Psoas muscle (tissue), 8 donors: ENCODE measurements at regions of chr5 and their contacts with region 1.

Region 1: DNA sequence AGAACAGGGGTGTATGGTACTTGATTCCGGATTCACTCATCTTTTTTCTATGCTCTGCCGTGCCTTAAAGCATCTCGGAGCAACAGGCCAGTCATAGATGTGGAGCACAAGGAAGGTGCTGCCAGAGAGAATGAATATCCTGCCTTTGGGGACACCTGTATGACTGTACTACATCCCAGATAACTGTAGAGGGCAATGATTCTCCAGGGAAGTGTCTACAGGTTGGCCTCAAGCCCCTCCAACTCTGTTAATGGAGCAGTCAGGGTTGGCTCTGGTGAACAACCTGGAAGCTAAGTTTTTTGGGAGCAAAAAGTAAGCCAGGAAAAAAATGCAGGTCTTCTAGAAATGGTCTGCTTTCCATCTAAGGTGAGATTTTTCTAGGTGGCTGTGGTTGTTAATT is 71.0 kb downstream of the NREP start:
- DNase-seq: no peak
- ATAC-seq: peak in 1 of 4 donors; percentile 36
- H3K4me3 ChIP-seq: no peak overlapping the region
- H3K27ac ChIP-seq: no peak overlapping the region
- H3K4me1 ChIP-seq: peaks cover 9% of the 10 kb centered on the region
- H3K27me3 ChIP-seq: no peaks in the 10 kb centered on the region
- CTCF ChIP-seq: peak; percentile 16

Region 2: DNA sequence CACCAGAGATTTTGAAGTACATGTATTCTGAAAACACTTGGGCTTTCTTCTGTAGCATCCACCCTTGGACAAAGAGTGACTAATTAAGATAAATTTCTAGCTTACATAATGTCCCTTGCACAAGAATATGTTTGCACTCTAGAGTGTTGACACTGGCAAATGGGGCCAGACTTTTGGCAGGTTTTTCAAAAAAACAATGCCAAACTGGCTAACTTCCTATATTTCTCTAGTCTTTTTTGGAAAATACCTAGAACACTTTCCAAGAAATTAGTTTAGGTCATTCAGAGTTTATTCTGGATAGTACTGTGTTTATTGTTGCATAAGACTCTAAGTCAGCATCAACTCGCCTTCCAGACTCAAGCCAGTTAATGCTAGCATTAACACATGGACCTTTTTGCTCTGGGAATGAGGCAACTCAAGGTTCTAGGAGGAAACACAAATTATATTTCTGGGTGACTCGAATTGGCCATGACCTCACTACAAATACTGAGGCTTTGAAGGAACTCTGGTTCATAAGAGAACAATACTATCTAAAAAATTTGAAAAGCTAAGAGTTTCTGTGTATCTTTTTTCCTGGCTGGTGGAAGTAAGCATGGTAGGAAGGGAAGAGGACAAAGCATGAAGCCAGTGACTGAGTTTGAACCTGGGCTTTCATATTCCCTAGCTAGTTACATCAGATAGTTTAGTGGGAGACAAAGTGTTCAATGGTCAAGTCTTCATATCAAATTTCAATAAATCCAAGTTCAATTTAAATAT is 30.6 kb before region 1 on chr5:
- intact Hi-C with region 1: no loop called
- DNase-seq: no peak
- ATAC-seq: peak in 3 of 4 donors; percentile 48 to 59 (median 48)
- H3K4me3 ChIP-seq: no peak overlapping the region
- H3K27ac ChIP-seq: no peak overlapping the region
- H3K4me1 ChIP-seq: no peaks in the 10 kb centered on the region
- H3K27me3 ChIP-seq: no peaks in the 10 kb centered on the region
- CTCF ChIP-seq: no peak

Region 3: DNA sequence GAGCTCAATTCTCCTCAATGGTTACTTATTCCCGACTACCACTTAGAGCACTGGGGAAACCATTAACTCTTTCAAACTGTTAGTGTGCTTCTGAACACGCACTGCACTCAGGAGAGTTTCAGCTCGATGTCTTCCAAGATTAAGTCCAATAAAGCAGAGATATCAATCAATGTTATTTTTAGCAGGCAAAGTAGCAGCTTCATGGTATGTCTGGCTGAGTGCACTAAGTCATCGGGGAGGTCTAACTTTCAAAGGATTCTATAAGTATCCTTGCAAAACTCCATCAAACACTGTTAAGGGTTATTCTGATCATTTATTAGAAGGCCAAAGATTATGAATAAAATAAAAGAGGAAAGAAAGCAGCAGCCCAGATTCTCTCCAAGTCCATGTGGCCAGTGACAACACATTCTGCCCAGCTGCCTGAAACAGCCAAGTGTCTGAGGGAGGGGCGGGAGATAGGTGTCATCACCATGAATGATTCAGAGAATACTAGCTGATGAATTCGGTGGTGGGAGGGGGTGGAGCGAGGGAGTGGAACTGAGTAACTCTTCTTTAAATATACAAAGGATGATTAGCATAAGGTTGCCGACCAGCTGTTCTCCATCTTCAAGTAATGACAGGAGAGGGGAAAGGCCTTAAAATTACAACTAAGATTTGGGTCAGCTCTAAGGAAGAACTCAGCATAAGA is 49.8 kb after region 1 on chr5:
- intact Hi-C with region 1: loop called in 1 of 2 experiments (anchors 5 kb)
- DNase-seq: peak; percentile 77 to 88
- ATAC-seq: peak; percentile 95 to 99 (median 99)
- H3K4me3 ChIP-seq: peak overlapping the region; percentile 20
- H3K27ac ChIP-seq: peak overlapping the region; percentile 81
- H3K4me1 ChIP-seq: peaks cover 61% of the 10 kb centered on the region
- H3K27me3 ChIP-seq: no peaks in the 10 kb centered on the region
- CTCF ChIP-seq: no peak

Region 4: DNA sequence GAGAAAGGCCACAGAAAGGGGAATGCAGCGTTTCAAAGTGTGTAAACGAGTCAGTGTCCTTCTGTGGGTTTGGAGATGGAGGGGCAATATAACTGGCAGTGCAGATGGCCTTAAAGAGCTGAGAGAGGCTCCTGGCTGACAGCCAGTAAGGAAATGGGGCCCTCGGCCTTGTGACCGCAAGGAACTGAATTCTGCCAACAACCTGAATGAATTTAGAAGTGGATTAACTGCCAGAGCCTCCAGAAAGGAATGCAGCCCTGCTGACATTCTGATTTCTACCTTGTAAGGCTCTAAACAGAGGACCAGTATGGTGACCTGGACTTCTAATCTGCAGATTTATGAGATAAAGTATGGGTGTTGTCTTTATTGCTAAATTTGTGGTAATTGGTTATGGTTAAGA is 88.6 kb after region 1 on chr5:
- intact Hi-C with region 1: no loop called
- DNase-seq: peak in 1 of 2 donors; percentile 51
- ATAC-seq: peak in 1 of 4 donors; percentile 27
- H3K4me3 ChIP-seq: no peak overlapping the region
- H3K27ac ChIP-seq: no peak overlapping the region
- H3K4me1 ChIP-seq: peaks cover 4% of the 10 kb centered on the region
- H3K27me3 ChIP-seq: no peaks in the 10 kb centered on the region
- CTCF ChIP-seq: no peak

Region 5: DNA sequence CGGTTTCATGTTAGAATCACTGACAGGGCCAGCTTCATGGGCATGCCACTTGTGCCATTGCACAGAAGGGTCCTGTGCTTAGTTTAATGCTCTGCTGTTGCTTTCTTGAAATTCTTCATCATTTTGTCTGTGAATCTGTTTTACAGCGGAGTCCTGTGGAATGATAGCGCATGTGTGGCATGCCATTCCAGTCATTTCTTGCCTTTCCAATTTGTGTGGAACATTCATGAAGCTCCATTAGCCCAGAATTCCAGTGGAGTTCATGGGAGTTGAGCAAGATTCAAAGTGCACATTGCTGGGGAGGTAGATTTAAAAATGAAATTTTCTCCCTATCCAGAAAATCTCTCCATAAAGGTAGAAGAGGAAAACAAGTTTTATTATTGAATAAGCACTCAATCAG is 114.4 kb after region 1 on chr5:
- intact Hi-C with region 1: no loop called
- DNase-seq: no peak
- ATAC-seq: no peak
- H3K4me3 ChIP-seq: no peak overlapping the region
- H3K27ac ChIP-seq: no peak overlapping the region
- H3K4me1 ChIP-seq: no peaks in the 10 kb centered on the region
- H3K27me3 ChIP-seq: no peaks in the 10 kb centered on the region
- CTCF ChIP-seq: no peak